Natural killer cell (primary cell): ENCODE measurements at regions of chr7 and their contacts with region 1.

Region 1: DNA sequence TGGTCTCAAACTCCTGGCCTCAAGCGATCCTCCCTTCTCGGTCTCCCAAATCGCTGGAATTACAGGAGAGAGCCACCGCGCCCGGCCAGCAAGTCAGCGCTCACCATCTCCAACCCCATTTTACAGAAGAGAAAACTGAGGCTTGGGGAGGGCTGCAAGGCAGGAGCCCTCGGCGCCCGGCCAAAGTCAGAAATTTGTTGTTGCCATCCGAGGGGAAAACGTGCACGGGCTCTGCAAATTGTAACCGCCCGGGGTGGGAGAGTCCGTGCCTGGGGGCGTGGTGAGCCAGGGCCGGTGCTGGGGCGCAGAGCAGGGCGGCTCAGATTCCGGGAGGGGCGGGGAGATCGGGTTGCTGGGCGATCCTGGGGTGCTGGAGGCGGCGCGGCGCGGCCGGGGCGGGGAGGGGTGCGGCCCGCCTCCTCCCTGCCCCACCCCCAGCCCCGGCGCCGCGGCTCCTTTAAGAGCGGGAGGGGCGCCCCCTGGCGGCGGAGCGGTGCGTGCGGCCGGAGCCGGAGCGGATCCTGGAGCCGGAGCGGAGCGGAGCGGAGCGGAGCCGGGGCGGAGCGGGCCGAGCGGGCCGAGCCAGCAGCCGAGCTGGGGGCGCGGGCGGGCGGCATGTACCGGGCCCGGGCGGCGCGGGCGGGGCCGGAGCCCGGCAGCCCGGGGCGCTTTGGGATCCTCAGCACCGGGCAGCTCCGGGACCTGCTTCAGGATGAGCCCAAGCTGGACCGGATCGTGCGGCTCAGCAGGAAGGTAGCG is at the start of gene VPS37D:
- DNase-seq: peak; percentile 93 to 96
- ATAC-seq: peak; percentile 93 to 99 (median 96)
- H3K4me3 ChIP-seq: peak within 1 kb of the TSS; percentile 35
- H3K4me3 Mint-ChIP-seq: peak within 1 kb of the TSS; percentile 84
- H3K27ac ChIP-seq: no peak within 1 kb of the TSS
- H3K27ac Mint-ChIP-seq: peak within 1 kb of the TSS in 1 of 2 donors; percentile 53
- H3K4me1 ChIP-seq: peaks cover 10% of the 10 kb centered on the region
- H3K4me1 Mint-ChIP-seq: peaks cover 0 to 10% of the 10 kb centered on the region in 2 donors
- H3K27me3 ChIP-seq: peaks cover 22% of the 10 kb centered on the region
- H3K27me3 Mint-ChIP-seq: peaks cover 28 to 35% of the 10 kb centered on the region in 2 donors
- CTCF ChIP-seq: peak; percentile 66
- total RNA-seq, gene VPS37D: 0.40 to 0.83 (median 0.48) TPM

Region 2: GRCh38 chr7:73606801-73607691 is 60.5 kb before region 1 on chr7:
- intact Hi-C with region 1: loop called (anchors 5 kb)
- DNase-seq: peak; percentile 70 to 82
- ATAC-seq: peak; percentile 69 to 90 (median 88)
- H3K4me3 ChIP-seq: no peak overlapping the region
- H3K4me3 Mint-ChIP-seq: no peak overlapping the region
- H3K27ac ChIP-seq: no peak overlapping the region
- H3K27ac Mint-ChIP-seq: no peak overlapping the region
- H3K4me1 ChIP-seq: peaks cover 7% of the 10 kb centered on the region
- H3K4me1 Mint-ChIP-seq: no peaks in the 10 kb centered on the region
- H3K27me3 ChIP-seq: peaks cover 14% of the 10 kb centered on the region
- H3K27me3 Mint-ChIP-seq: peaks cover 12 to 29% of the 10 kb centered on the region in 2 donors
- CTCF ChIP-seq: peak; percentile 91